Endothelial cell of umbilical vein (primary cell): ENCODE measurements at regions of chr10 and their contacts with region 1.

Region 1: DNA sequence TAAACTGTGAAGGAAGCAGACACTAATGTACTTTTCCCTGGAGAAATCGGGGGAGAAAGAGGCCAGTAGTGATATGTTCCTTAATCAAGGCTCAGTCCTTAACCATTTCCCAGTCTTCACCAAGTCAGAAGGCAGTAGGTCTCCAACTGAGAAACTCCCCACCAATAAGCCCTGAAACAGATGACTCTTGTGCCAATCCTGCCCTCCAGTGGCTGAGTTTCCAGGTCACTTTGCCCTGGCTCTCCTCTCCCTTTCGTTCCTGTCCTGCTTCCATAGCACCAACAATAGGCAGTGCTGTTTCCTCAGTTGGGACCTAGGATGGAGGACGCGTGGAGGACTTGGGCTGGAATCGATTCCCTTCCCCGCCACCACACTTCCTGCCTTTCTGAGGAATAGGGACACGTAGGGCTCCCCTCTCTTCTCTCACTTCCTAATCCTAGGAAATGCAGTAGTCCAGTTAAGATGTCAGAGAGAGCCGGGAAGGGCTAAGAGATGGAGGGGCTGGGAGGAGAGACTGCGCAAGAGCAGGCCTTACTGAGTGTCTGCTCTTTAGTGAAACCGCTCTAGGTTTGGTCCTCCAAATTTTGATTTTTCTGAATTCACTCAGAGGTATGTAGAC is 23.4 kb downstream of the ATOH7 start:
- DNase-seq: peak; percentile 82
- H3K4me3 ChIP-seq: no peak overlapping the region
- H3K27ac ChIP-seq: no peak overlapping the region
- H3K4me1 ChIP-seq: no peaks in the 10 kb centered on the region
- H3K27me3 ChIP-seq: peaks cover 5 to 10% of the 10 kb centered on the region in 2 experiments
- CTCF ChIP-seq: peak; percentile 70 to 75
- POLR2A ChIP-seq: no peak

Region 2: DNA sequence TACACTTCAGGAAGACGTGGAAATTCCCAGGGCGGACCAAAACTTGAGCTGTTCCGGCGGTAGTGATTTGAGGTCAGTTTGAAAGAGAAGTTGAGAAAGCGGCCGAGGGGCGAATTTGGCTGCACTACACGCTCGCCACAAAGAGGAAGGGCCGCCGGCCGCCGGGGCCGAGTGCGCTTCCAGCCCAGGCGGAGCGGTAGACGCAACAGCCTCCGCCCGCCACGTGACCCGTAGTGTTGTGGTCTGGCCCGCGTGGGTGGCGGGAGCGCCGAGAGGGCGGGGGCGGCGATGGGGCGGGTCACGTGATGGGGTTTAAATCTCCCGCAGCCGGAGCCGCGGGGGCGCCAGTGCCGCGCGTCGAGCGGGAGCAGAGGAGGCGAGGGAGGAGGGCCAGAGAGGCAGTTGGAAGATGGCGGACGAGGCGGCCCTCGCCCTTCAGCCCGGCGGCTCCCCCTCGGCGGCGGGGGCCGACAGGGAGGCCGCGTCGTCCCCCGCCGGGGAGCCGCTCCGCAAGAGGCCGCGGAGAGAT is 324.2 kb before region 1 on chr10 and contains the start of gene SIRT1:
- CTCF ChIA-PET with region 1: interaction called, 6 read pairs
- POLR2A ChIA-PET with region 1: no interaction called
- dilution Hi-C with region 1: no loop called
- intact Hi-C with region 1: loop called (anchors 1 kb)
- DNase-seq: peak; percentile 96
- H3K4me3 ChIP-seq: peak within 1 kb of the TSS; percentile 95 to 97 (median 96)
- H3K27ac ChIP-seq: peak within 1 kb of the TSS; percentile 68
- H3K4me1 ChIP-seq: peaks cover 11% of the 10 kb centered on the region
- H3K27me3 ChIP-seq: no peaks in the 10 kb centered on the region
- CTCF ChIP-seq: no peak
- POLR2A ChIP-seq: peak; percentile 96
- total RNA-seq, gene SIRT1: 14.8 and 15.1 TPM in 2 replicates

Region 3: DNA sequence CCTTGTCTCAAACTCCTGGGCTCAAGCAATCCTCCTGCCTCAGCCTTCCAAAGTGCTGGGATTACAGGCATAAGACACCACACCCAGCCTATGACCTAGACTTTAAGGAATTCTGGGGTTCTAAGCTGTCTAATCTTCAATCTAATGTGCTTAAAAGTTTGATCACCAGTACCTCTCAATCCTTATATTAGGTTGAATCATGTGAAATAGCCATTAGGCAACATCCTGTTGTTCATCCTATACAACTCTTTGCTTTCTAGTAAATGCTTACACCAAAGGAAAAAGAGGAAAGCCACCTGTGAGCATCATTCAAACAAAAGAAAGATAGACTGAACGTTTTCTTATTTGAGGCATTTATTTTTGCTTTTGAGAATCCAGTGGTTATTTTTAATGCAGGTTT is 32.6 kb before region 1 on chr10:
- CTCF ChIA-PET with region 1: interaction called, 11 read pairs
- POLR2A ChIA-PET with region 1: no interaction called
- dilution Hi-C with region 1: no loop called
- intact Hi-C with region 1: no loop called
- DNase-seq: no peak
- H3K4me3 ChIP-seq: no peak overlapping the region
- H3K27ac ChIP-seq: no peak overlapping the region
- H3K4me1 ChIP-seq: no peaks in the 10 kb centered on the region
- H3K27me3 ChIP-seq: no peaks in the 10 kb centered on the region
- CTCF ChIP-seq: no peak
- POLR2A ChIP-seq: no peak

Region 4: DNA sequence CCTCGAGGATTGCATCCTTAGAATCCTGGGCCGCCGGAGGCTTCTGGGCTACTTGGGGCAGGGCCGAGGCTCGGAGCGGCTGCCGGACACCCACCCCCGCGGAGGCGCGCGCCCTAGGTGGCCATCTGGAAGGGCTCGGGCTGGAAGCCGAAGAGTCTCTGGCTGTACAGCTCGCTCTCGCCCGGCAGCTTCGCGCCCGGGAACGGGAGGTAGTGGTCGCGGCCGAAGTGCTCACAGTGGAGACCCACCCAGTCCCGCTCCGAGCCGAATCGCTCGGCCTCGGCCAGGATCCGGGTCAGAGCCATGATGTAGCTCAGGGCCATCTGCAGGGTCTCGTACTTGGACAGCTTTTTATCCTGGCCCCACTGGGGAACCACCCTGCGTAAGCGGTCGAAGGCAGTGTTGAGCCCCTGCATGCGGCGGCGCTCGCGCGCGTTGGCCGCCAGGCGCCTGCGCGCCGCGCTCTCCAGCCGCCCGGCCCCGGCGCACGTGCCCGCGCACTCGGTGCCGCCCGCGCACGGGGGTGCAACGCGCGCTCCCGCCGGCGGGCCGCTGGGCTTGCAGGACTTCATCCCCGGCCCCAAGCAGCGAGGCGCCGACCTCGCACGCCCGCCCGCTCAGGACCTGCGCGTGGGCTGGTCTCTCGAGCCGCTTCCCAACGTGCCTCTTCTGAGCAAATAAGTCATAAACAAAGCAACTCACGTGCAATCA is 22.7 kb after region 1 on chr10:
- CTCF ChIA-PET with region 1: interaction called, 38 read pairs
- POLR2A ChIA-PET with region 1: no interaction called
- dilution Hi-C with region 1: no loop called
- intact Hi-C with region 1: no loop called
- DNase-seq: peak; percentile 81
- H3K4me3 ChIP-seq: peak overlapping the region; percentile 37 to 72 (median 58)
- H3K27ac ChIP-seq: no peak overlapping the region
- H3K4me1 ChIP-seq: peaks cover 12% of the 10 kb centered on the region
- H3K27me3 ChIP-seq: peaks cover 25 to 29% of the 10 kb centered on the region in 2 experiments
- CTCF ChIP-seq: peak; percentile 5 to 45
- POLR2A ChIP-seq: no peak

Region 5: GRCh38 chr10:68331455-68332258 is 123.1 kb after region 1 on chr10 and contains the start of gene HNRNPH3:
- CTCF ChIA-PET with region 1: interaction called, 12 read pairs
- POLR2A ChIA-PET with region 1: interaction called, 5 read pairs
- dilution Hi-C with region 1: no loop called
- intact Hi-C with region 1: no loop called
- DNase-seq: peak; percentile 98
- H3K4me3 ChIP-seq: peak within 1 kb of the TSS; percentile 95 to 100 (median 99)
- H3K27ac ChIP-seq: peak within 1 kb of the TSS; percentile 91
- H3K4me1 ChIP-seq: peaks cover 15% of the 10 kb centered on the region
- H3K27me3 ChIP-seq: no peaks in the 10 kb centered on the region
- CTCF ChIP-seq: no peak
- POLR2A ChIP-seq: peak; percentile 98
- total RNA-seq, gene HNRNPH3: 146 and 151 TPM in 2 replicates